ENCODE measurements at regions of chr16 and their contacts with region 1.

Region 1: DNA sequence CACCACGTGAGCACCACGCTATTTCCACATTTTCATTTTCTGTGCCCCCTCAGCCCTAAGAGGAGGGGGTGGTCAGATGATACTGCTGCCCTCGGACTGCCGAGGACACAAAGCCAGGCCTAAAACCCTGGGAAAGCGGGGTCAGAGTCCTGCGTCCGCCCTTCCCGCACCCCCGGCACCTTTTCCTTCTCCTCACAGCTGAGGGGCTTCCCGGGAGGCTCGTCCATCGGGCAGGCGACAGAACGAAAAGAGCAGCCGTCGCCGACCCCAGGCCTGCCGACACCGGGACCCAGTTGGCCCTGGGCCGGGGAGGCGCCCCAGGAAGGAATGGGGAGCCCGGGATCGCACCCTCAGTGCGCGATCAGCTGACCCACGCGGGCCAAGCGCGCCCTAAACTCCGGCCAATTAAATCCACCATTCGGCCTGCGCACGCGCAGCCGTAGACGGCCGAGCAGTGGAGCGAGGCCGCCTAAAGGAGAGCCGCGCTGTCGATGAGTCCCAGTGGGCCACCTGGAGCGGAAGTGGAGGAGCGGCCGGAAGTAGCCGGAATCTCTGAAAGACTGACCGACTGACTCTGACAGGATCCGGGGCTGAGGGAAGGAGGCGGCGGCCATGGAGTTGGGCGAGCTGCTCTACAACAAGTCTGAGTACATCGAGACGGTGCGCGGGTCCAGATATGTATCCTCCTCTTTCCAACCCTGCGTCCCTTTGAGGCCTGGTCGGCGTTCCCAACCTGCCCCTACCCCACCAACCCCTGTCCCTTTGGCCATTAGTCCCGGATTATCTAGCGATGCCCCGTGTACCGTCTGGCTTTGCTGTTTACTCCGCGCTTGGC is at the starts of genes DCTN5 and PALB2:
- DNase-seq: peak; percentile 90 to 93
- H3K4me3 ChIP-seq: peak within 1 kb of the TSS; percentile 87
- H3K27ac ChIP-seq: peak within 1 kb of the TSS; percentile 38
- H3K4me1 ChIP-seq: peaks cover 14% of the 10 kb centered on the region
- H3K27me3 ChIP-seq: no peaks in the 10 kb centered on the region
- CTCF ChIP-seq: no peak
- total RNA-seq, gene DCTN5: 52.9 and 84.8 TPM in 2 replicates
- total RNA-seq, gene PALB2: 15.1 and 19.1 TPM in 2 replicates

Region 2: DNA sequence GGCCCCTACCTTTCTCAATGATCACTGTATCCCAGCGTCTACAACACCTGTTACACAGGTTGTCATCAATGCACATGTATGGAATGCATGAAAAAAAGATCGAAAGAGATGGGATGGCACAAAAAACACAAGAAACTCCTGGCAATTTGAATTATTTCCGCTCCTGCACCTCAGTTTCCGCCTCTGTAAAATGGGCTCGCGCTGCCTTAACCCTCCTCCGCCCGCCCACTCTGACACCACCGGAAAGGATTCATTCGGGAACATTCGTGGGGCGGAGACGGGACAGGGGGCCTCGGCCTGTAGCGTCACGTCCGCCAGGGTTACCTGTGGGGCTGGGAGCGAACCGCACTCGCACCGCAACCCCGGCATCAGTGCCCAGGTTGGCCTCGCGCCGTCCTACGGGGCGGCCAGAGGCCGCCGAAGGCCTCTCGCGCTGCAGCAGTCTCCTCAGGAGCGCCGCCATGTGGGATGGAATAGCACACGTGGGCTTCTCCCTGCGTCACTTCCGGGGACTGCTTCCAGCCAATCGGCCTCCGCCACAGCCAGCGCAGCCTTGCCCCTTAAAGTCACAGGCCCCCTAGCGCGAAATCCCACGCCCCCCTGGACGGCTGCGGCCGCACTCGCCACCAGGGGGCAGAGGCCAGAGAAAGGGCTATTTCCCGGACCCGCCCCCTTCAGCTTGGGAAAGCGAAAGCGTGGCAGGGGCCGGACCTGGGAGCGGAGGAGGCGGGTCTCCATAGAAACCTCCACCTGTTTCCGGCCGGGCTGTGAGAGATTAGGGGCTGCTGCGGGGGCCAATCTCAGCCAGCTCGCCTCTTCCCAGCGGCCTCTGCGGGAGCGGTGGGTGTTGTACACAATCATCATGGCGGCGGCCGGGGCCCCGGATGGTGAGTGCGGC is 84.0 kb before region 1 on chr16 and contains the starts of genes EARS2 and UBFD1:
- CTCF ChIA-PET with region 1: no interaction called
- POLR2A ChIA-PET with region 1: no interaction called
- intact Hi-C with region 1: loop called (anchors 1 kb)
- DNase-seq: peak; percentile 94 to 100
- H3K4me3 ChIP-seq: peak within 1 kb of the TSS; percentile 98
- H3K27ac ChIP-seq: peak within 1 kb of the TSS; percentile 79
- H3K4me1 ChIP-seq: peaks cover 26% of the 10 kb centered on the region
- H3K27me3 ChIP-seq: no peaks in the 10 kb centered on the region
- CTCF ChIP-seq: peak; percentile 89
- total RNA-seq, gene EARS2: 34.9 and 43.3 TPM in 2 replicates
- total RNA-seq, gene UBFD1: 95.8 and 98.2 TPM in 2 replicates

Region 3: GRCh38 chr16:23595951-23596720 is 45.0 kb before region 1 on chr16 and contains the start of gene NDUFAB1:
- CTCF ChIA-PET with region 1: interaction called, 6 read pairs
- POLR2A ChIA-PET with region 1: no interaction called
- intact Hi-C with region 1: loop called (anchors 5 kb)
- DNase-seq: peak; percentile 78 to 92
- H3K4me3 ChIP-seq: peak within 1 kb of the TSS; percentile 96
- H3K27ac ChIP-seq: peak within 1 kb of the TSS; percentile 22
- H3K4me1 ChIP-seq: peaks cover 3% of the 10 kb centered on the region; the same call in 1 of the 2 replicates
- H3K27me3 ChIP-seq: no peaks in the 10 kb centered on the region
- CTCF ChIP-seq: peak; percentile 87
- total RNA-seq, gene NDUFAB1: 125 and 136 TPM in 2 replicates

Region 4: GRCh38 chr16:23757116-23757515 is 116.0 kb after region 1 on chr16:
- CTCF ChIA-PET with region 1: interaction called, 10 read pairs
- POLR2A ChIA-PET with region 1: no interaction called
- intact Hi-C with region 1: no loop called
- DNase-seq: no peak
- H3K4me3 ChIP-seq: no peak overlapping the region
- H3K27ac ChIP-seq: no peak overlapping the region
- H3K4me1 ChIP-seq: no peaks in the 10 kb centered on the region
- H3K27me3 ChIP-seq: peaks cover 67% of the 10 kb centered on the region
- CTCF ChIP-seq: no peak